ENCODE measurements at regions of chr6 and their contacts with region 1.

Region 1: DNA sequence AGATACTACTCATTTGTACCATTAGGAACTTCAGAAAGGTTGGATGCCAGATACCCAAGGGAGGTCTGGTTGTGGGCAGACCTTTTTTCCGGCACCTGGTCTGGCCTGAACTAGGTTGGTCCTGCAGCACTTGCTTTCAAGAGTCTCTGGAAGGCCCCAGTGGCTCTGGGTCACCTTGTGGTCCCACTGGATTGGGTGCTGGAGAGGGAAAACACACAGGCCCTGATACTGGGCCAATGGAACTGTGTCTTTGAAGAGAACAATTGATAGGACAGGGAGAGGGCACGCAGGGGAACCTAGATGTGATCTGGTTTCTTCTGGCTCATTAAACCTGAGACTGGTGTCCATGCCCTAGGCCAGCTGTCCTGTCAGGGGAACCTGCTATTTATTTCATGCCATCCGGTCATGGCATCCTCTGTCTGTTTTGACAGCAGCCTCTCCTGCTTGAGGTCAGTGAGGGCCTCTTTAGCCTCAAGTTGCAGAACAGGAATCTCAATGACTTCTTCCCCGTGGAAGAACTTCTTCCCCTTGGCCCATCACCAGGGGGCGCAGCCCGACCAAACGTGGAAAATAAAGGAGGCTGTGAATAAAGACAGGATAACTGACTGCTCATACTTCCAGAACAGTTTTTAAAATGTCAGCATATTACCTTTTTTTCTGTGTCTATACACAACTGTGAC is 25.0 kb downstream of the TAF8 start:
- DNase-seq: peak; percentile 45 to 68
- ATAC-seq: peak; percentile 60 to 77
- H3K4me3 ChIP-seq: no peak overlapping the region
- H3K27ac ChIP-seq: peak overlapping the region in 2 of 4 donors; percentile 6 to 25
- H3K4me1 ChIP-seq: no peaks in the 10 kb centered on the region
- H3K27me3 ChIP-seq: no peaks in the 10 kb centered on the region
- CTCF ChIP-seq: peak; percentile 57 to 74 (median 67)
- POLR2A ChIP-seq: no peak

Region 2: GRCh38 chr6:41135062-41135832 is 940.1 kb before region 1 on chr6:
- in situ Hi-C with region 1: no loop called
- intact Hi-C with region 1: no loop called
- DNase-seq: no peak
- ATAC-seq: no peak
- H3K4me3 ChIP-seq: no peak overlapping the region
- H3K27ac ChIP-seq: no peak overlapping the region
- H3K4me1 ChIP-seq: no peaks in the 10 kb centered on the region
- H3K27me3 ChIP-seq: no peaks in the 10 kb centered on the region
- CTCF ChIP-seq: no peak
- POLR2A ChIP-seq: no peak

Region 3: GRCh38 chr6:42166444-42167141 is 91.3 kb after region 1 on chr6:
- in situ Hi-C with region 1: loop called (anchors 5 to 10 kb)
- intact Hi-C with region 1: loop called (anchors 1 kb)
- DNase-seq: peak; percentile 22 to 31
- ATAC-seq: peak in 1 of 2 donors; percentile 74
- H3K4me3 ChIP-seq: no peak overlapping the region
- H3K27ac ChIP-seq: no peak overlapping the region
- H3K4me1 ChIP-seq: no peaks in the 10 kb centered on the region
- H3K27me3 ChIP-seq: no peaks in the 10 kb centered on the region
- CTCF ChIP-seq: peak; percentile 78 to 94 (median 87)
- POLR2A ChIP-seq: no peak

Region 4: DNA sequence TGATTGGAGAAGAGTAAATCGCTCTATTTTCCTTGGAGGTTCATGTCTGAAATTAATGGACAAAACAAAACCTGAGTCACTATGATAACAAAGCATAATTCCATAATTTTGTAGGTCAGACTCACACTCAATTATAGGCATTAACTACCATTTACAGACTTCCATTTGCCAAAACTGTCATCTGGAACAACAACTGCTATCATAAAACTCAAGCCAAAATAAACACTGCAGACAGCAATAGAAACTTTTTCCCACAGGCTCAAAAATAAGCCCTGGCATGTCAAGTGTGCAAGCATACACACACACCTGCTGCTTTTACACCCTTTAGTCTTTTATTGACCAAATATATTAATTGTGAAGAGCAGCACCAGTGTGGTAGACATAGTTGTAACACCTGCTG is 135.3 kb after region 1 on chr6:
- in situ Hi-C with region 1: no loop called
- intact Hi-C with region 1: loop called (anchors 5 kb)
- DNase-seq: no peak
- ATAC-seq: no peak
- H3K4me3 ChIP-seq: no peak overlapping the region
- H3K27ac ChIP-seq: no peak overlapping the region
- H3K4me1 ChIP-seq: peaks cover 7 to 8% of the 10 kb centered on the region in 2 donors
- H3K27me3 ChIP-seq: no peaks in the 10 kb centered on the region
- CTCF ChIP-seq: no peak
- POLR2A ChIP-seq: no peak

Region 5: DNA sequence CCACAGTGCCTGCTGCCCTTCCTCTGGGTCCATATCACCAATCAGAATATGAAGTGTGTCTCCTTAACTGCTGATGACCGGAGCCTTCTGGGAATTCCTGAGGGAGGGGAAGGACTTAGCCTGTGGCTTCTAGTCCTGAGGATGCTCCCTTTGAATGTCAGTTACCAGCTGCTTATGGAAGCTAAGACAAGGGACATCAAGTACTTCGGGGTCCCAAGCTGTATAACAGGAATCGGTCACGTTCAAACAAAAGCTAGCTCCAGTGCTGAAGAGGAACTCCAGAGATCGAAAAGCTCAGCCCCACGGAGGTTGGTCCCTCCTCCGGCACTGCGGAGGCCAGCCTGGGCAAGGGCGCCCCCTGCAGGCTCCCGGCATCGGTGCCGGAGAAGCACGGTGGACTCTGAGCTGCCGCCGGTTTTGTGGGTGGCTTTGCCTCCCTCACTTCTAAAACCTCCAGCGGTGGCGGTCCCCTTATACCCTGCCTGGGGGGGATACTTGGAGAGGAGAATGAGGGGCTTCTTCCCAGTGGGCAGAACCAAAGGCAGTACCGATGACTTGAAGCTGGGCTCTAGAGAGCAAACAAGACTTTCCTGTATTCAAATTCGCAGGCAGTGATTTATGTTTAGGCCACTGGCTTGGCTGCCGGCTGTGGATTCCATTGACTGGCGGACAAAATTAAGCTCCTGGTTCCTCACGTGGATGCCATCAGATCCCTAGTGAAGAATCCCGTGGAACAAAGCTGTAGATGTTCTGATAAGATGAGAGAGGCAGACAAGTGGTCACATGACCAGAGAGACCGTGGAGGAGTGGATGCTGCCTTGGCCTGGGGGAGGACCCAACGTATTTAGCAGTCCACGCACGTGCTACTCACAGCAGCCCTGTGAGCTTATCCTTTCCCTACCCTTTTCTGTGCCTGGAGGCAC is 472.4 kb after region 1 on chr6:
- in situ Hi-C with region 1: loop called in 2 of 4 experiments (anchors 25 kb)
- intact Hi-C with region 1: no loop called
- DNase-seq: peak; percentile 45 to 54
- ATAC-seq: peak; percentile 94
- H3K4me3 ChIP-seq: peak overlapping the region; percentile 51 to 60 (median 52)
- H3K27ac ChIP-seq: peak overlapping the region; percentile 4 to 58 (median 30)
- H3K4me1 ChIP-seq: peaks cover 0 to 6% of the 10 kb centered on the region in 2 donors
- H3K27me3 ChIP-seq: no peaks in the 10 kb centered on the region
- CTCF ChIP-seq: peak; percentile 78 to 97 (median 89)
- POLR2A ChIP-seq: no peak